HAP-1 (cell line): ENCODE measurements at regions of chr1 and their contacts with region 1.

Region 1: GRCh38 chr1:121443001-121443540 is 258.3 kb downstream of the SRGAP2C start:
- DNase-seq: no peak
- H3K4me3 ChIP-seq: no peak overlapping the region
- H3K4me1 ChIP-seq: no peaks in the 10 kb centered on the region
- H3K27me3 ChIP-seq: no peaks in the 10 kb centered on the region

Region 2: GRCh38 chr1:121483961-121484424 is 40.9 kb after region 1 on chr1:
- in situ Hi-C with region 1: loop called (anchors 5 kb)
- DNase-seq: no peak
- H3K4me3 ChIP-seq: no peak overlapping the region
- H3K4me1 ChIP-seq: no peaks in the 10 kb centered on the region
- H3K27me3 ChIP-seq: no peaks in the 10 kb centered on the region

Region 3: GRCh38 chr1:121558514-121558913 is 115.4 kb after region 1 on chr1:
- in situ Hi-C with region 1: no loop called
- DNase-seq: no peak
- H3K4me3 ChIP-seq: no peak overlapping the region
- H3K4me1 ChIP-seq: peaks cover 14% of the 10 kb centered on the region
- H3K27me3 ChIP-seq: no peaks in the 10 kb centered on the region